ENCODE measurements at regions of chr7 and their contacts with region 1.

Region 1: DNA sequence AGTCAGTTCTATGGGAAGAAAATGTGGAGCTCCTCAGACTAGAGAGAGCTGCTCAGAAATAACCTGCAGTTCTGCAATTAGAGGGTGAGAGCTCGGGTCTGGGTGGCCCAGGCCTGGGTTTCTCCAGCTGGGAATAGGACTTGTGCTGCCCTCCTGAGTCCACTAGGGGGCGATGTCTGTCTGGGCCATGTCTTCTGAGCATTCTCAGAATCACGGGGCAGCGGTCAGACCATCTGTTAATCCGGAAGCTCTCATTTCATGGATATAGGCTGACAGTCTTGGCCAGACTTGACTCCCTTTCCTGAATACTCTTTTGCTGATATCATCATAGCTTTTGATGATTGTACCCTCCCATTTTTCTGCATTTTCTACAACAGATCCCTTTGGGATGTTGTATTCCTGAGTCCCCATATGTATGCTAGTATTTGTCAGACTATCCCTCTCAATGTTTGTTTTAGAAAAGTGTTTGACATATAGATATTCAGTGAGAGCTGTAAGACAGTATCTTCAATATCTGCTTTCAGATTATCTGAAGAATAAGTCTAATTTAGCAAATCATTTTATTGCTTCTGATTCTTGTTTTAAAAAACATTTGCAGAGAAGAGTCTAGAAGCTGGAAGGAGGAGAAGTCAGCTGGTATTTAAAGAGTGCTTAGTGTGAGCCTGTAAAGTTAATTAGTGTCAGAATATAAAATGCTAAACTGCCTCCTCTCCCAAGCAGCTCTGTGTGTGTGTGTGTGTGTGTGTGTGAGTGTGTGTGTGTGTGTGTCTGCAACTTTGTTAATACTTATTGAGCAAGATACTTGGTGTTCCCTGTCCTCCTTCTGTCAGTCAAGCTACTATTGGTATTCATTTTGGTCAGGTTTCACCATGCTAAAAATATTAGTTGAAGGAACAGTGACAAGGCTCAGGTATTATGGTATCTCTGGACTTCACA is 38.0 kb downstream of the STARD3NL start:
- DNase-seq: peak; percentile 67
- H3K4me3 ChIP-seq: no peak overlapping the region
- CTCF ChIP-seq: peak; percentile 92

Region 2: DNA sequence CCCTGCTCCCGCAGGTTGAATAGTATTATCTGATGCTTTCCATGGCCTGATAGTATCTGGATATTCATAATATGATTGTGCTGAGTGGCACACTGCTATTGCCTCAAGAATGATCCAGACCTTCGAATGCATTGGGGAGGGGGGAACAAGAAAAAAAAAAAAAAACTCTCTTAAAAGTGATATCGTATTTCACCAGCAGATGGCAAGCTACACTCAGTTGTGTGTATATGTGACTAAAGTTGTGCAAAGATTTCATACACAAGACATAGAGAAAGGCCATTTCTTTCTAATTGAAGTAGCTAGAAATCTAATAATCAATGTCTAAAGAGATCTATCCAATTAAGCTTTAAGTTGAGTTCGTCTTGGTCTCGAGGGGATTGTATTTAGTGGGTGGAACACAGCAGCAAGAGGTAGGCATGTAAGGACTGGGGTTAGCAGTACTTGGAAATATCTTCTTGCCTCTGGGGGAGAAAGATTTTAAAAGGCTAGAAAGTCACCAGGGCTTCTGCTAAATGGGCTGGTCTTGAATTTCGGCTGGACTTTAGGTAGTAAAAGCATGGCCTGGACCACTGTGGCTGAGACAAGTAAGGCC is 314.7 kb before region 1 on chr7:
- CTCF ChIA-PET with region 1: interaction called, 16 read pairs
- POLR2A ChIA-PET with region 1: no interaction called
- DNase-seq: no peak
- H3K4me3 ChIP-seq: no peak overlapping the region
- CTCF ChIP-seq: peak; percentile 42

Region 3: GRCh38 chr7:38107486-38107893 is 108.5 kb before region 1 on chr7:
- CTCF ChIA-PET with region 1: interaction called, 73 read pairs
- POLR2A ChIA-PET with region 1: no interaction called
- DNase-seq: no peak
- H3K4me3 ChIP-seq: no peak overlapping the region
- CTCF ChIP-seq: peak; percentile 67

Region 4: DNA sequence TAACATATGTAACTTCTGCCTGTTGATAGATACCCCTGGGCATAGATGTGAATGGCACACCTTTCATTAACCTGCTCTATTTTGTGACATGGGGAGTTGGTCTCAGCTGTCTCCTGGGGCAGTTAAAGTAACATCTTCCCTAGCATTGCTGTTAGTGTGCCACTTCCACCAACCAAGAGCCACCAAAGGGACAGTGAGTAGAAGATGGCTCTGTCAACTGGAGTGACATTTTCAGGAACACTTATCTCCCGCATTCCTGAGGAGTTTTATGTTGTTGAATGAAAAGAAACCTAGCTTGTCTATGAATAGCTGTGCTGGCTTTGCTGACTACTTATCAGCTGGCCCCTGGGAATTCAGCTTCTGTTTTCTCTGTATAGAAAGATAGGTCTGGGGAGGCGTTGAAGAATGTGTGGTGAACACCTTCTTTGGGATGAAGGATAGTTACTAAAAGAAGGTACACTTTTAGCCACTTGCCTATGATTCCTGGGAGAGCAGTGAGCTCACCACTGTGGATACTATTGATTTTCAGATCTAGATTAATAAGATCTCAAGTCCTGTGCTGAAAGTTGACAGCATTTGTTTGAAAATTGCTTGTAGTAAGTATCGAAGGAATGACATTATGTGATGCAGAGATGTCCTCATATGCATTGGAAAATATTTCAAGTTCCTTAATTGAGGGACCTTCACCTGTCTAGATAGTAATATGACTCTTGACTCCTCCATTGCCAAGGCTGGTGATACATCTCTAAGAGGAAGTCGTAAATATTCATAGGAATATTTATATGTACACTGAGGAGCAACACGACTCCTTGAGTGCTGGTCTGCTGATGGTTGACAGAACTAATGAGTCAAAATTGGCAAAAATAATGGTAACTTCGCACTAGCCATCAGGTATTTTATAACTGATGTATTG is 30.4 kb before region 1 on chr7:
- CTCF ChIA-PET with region 1: interaction called, 31 read pairs
- POLR2A ChIA-PET with region 1: no interaction called
- DNase-seq: no peak
- H3K4me3 ChIP-seq: no peak overlapping the region
- CTCF ChIP-seq: no peak

Region 5: GRCh38 chr7:38229386-38229785 is 13.4 kb after region 1 on chr7:
- CTCF ChIA-PET with region 1: interaction called, 57 read pairs
- POLR2A ChIA-PET with region 1: no interaction called
- DNase-seq: no peak
- H3K4me3 ChIP-seq: no peak overlapping the region
- CTCF ChIP-seq: no peak

Region 6: DNA sequence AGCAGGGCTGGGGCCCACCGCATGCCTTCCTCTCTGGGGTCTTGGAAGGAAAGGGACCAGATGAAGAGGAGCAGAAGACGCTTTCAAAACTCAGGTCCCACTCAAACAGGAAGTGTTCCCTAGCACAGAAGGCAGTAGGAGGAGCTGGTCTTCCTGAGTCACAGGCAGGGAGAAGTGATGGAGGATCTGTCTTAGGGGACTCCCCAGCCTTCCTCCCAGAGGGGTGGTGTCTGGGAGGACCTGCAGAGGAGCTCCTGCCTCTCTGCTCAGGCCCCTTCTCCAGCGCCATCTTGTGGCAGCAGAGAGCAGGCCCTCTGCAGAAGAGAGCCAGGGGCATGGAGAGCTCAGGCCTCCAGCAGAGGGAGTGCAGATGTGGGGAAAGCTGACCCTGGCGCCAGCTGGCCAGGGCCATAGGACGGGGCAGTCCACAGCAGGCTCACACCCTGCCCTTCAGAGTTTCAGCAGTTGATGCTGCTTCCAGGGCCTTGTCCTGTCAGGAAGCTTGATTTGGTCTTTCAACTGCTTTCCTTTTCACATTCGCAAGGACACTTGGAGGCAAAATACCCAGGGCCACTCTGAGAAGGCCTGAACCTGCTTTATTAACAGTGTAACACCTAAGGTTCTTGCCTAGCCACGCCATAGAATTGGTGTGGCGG is 119.6 kb after region 1 on chr7:
- CTCF ChIA-PET with region 1: interaction called, 265 read pairs
- POLR2A ChIA-PET with region 1: no interaction called
- DNase-seq: peak; percentile 80
- H3K4me3 ChIP-seq: peak overlapping the region; percentile 32
- CTCF ChIP-seq: peak; percentile 100

Region 7: GRCh38 chr7:38360776-38361175 is 144.8 kb after region 1 on chr7:
- CTCF ChIA-PET with region 1: interaction called, 66 read pairs
- POLR2A ChIA-PET with region 1: no interaction called
- DNase-seq: no peak
- H3K4me3 ChIP-seq: no peak overlapping the region
- CTCF ChIP-seq: no peak

Measured in AG04449 (cell line).